ENCODE measurements at regions of chr17 and their contacts with region 1.

Region 1: DNA sequence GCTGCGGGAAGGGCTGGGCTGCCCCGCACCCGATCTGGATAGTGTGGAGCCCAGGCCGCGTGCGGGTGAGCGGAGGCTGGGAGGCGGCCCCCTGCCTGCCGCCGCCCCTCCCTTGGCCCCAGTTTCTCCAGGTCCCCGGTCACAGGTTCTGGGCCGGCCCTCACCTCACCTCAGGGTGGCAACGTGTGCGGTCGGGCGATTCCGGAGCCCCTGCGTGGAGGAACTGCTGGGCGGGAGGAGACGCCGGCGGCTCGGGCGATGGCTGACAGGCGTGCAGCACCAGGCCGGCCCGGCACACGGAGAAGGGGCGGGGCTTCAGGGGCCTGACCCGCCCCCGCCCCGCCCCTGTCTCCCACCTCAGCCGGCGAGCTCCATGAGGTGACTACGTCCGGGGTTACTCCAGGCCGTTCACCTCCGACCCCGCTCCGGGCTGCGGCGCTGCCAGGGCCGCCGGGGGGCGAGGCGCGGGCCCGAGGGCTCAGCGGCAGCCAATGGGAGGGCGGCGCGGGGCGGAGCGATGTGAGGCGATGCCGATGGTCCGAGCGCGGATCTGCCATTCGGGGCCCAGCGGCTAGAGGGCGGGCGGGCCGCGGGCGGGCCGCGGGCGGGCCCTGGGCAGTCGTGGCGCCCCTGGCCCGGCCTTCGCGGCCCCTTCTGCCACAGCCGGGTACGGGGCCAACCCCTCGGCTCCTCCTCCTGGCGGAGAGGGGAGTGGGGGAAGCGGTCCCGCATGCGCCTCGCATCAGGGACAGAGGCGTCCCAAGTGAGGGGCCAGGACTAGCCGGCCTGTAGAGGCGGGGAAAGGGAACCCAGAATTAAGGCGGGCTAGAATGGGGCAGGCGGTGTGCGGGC is 16.7 kb upstream of the C17orf78 start:
- DNase-seq: peak; percentile 73 to 96 (median 84)
- ATAC-seq: peak; percentile 95
- H3K4me3 ChIP-seq: peak overlapping the region; percentile 74
- H3K4me3 Mint-ChIP-seq: peak overlapping the region; percentile 93
- H3K27ac ChIP-seq: peak overlapping the region; percentile 41 to 63
- H3K27ac Mint-ChIP-seq: peak overlapping the region; percentile 89
- H3K4me1 ChIP-seq: peaks cover 16% of the 10 kb centered on the region
- H3K4me1 Mint-ChIP-seq: peaks cover 22% of the 10 kb centered on the region
- H3K27me3 ChIP-seq: no peaks in the 10 kb centered on the region
- H3K27me3 Mint-ChIP-seq: no peaks in the 10 kb centered on the region
- CTCF ChIP-seq: no peak

Region 2: DNA sequence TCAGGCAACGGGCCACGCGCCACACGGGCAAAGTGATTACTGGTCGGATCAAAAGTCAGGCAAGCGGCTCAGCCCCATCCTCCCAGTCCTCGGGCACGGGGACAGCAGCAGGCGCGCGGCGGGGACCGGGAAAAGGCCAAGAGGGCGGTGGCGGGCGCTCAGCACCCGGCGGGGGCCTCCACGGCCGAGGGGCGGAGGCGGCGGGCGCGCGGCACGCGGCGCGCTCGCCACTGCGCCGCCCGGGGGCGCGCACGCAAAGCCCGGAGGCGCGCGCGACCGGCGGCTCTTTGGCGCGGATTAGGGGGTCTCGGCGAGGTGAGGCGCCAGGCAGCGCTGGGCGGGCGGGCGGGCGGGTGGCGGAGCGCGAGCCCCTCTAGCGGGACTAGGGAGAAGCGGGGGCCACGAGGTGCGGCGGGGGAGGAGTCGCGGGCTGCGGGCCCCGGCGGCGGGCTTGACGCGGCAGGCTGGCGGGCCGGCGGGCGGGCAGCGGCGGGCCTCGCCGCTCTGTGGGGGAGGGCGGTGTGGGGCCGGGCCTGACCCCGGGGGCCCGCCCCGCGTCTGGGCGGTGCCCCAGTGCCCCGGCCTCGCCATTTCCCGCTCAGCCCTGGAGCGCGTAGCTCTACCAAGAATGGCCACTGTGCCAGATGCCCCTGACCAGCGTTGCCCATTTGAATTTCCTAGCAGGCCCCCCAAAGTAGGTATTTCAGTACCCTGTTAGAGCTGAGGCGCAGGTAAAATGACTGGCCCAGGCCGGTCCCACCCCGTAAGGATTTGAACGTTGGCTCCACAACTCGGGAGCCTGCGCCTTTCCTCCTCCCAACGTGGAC is 47.8 kb after region 1 on chr17 and contains the starts of genes ACACA and TADA2A:
- CTCF ChIA-PET with region 1: no interaction called
- POLR2A ChIA-PET with region 1: interaction called, 5 read pairs
- intact Hi-C with region 1: loop called (anchors 2 kb)
- DNase-seq: peak; percentile 43 to 89 (median 64)
- ATAC-seq: peak; percentile 87
- H3K4me3 ChIP-seq: peak within 1 kb of the TSS; percentile 96
- H3K4me3 Mint-ChIP-seq: peak within 1 kb of the TSS; percentile 99
- H3K27ac ChIP-seq: peak within 1 kb of the TSS; percentile 36 to 52
- H3K27ac Mint-ChIP-seq: peak within 1 kb of the TSS; percentile 92
- H3K4me1 ChIP-seq: peaks cover 27% of the 10 kb centered on the region
- H3K4me1 Mint-ChIP-seq: peaks cover 48% of the 10 kb centered on the region
- H3K27me3 ChIP-seq: no peaks in the 10 kb centered on the region
- H3K27me3 Mint-ChIP-seq: no peaks in the 10 kb centered on the region
- CTCF ChIP-seq: no peak
- total RNA-seq, gene ACACA: 26.0 to 28.9 TPM
- total RNA-seq, gene TADA2A: 6.7 to 8.0 TPM

Region 3: GRCh38 chr17:37551788-37552187 is 192.7 kb after region 1 on chr17:
- CTCF ChIA-PET with region 1: no interaction called
- POLR2A ChIA-PET with region 1: no interaction called
- intact Hi-C with region 1: no loop called
- DNase-seq: no peak
- ATAC-seq: no peak
- H3K4me3 ChIP-seq: no peak overlapping the region
- H3K4me3 Mint-ChIP-seq: no peak overlapping the region
- H3K27ac ChIP-seq: no peak overlapping the region
- H3K27ac Mint-ChIP-seq: peak overlapping the region; percentile 75
- H3K4me1 ChIP-seq: peaks cover 13% of the 10 kb centered on the region
- H3K4me1 Mint-ChIP-seq: peaks cover 72% of the 10 kb centered on the region
- H3K27me3 ChIP-seq: no peaks in the 10 kb centered on the region
- H3K27me3 Mint-ChIP-seq: no peaks in the 10 kb centered on the region
- CTCF ChIP-seq: no peak

Region 4: GRCh38 chr17:37643118-37643766 is 284.2 kb after region 1 on chr17 and contains the start of gene DDX52:
- CTCF ChIA-PET with region 1: no interaction called
- POLR2A ChIA-PET with region 1: no interaction called
- intact Hi-C with region 1: loop called in 1 of 2 experiments (anchors 5 kb)
- DNase-seq: peak; percentile 79 to 96 (median 86)
- ATAC-seq: peak; percentile 100
- H3K4me3 ChIP-seq: peak within 1 kb of the TSS; percentile 74
- H3K4me3 Mint-ChIP-seq: peak within 1 kb of the TSS; percentile 97
- H3K27ac ChIP-seq: peak within 1 kb of the TSS; percentile 61 to 66
- H3K27ac Mint-ChIP-seq: peak within 1 kb of the TSS; percentile 92
- H3K4me1 ChIP-seq: peaks cover 14% of the 10 kb centered on the region
- H3K4me1 Mint-ChIP-seq: peaks cover 40% of the 10 kb centered on the region
- H3K27me3 ChIP-seq: peaks cover 16% of the 10 kb centered on the region in 2 experiments
- H3K27me3 Mint-ChIP-seq: peaks cover 41% of the 10 kb centered on the region
- CTCF ChIP-seq: no peak
- total RNA-seq, gene DDX52: 27.4 to 30.1 TPM